ENCODE measurements at regions of chr3 and their contacts with region 1.

Region 1: DNA sequence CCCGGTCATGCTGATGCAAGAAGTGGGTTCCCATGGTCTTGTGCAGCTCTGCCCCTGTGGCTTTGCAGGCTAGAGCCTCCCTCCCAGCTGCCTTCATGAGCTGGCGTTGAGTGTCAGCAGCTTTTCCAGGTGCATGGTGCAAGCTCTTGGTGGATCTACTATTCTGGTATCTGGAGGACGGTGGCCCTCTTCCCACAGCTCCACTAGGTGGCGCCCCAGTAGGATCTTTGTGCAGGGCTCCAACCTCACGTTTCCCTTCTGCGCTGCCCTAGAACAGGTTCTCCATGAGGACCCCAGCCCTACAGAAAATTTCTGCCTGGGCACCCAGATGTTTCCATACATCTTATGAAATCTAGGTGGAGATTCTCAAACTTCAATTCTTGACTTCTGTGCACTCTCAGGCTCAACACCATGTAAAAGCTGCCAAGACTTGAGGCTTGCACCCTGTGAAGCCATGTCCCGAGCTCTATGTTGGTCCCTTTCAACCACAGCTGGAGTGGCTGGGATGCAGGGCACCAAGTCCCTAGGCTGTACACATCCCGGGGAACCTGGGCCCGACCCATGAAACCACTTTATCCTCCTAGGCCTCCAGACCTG is 238.4 kb upstream of the MDFIC2 start:
- DNase-seq: no peak
- H3K4me3 ChIP-seq: no peak overlapping the region
- CTCF ChIP-seq: peak; percentile 84

Region 2: DNA sequence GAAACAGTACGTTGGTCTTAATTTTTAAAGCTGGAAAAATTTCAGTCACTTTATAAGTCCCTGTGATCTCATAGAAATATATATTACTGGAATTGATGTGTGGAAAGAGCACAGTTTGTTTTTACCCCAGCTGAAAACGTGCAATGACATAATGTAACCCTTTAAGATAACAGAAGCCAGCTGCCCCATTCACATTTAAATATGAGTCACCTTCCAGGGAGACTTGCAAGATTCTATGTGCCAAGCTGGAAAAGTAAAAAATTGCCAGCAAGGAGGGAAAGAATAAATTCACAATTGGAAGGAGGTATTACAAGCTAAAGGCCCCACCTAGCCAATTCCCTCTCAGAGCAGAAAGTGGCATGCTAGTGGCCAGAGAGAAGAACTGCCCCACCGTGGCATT is 501.1 kb before region 1 on chr3:
- CTCF ChIA-PET with region 1: no interaction called
- POLR2A ChIA-PET with region 1: no interaction called
- DNase-seq: no peak
- H3K4me3 ChIP-seq: no peak overlapping the region
- CTCF ChIP-seq: no peak

Region 3: DNA sequence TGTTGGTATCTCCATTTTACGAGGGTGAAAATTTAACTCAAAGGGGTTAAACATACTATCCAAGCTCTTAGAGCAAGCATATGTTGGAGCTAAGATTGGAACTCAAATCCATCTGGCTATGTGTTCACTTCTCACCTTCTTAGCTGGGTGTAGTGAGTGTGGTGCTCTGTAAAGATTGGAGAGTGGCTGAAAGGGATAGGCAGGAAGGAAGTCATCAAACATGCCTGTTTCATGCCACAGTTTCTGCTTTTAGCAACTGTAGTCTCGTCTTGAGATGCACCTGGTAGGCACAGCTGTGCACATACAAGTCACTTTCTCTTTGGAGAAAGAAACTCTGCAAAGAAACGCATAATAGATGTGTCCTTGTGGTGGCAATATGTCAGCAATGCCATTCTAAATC is 49.3 kb before region 1 on chr3:
- CTCF ChIA-PET with region 1: no interaction called
- POLR2A ChIA-PET with region 1: no interaction called
- DNase-seq: no peak
- H3K4me3 ChIP-seq: no peak overlapping the region
- CTCF ChIP-seq: no peak

Region 4: DNA sequence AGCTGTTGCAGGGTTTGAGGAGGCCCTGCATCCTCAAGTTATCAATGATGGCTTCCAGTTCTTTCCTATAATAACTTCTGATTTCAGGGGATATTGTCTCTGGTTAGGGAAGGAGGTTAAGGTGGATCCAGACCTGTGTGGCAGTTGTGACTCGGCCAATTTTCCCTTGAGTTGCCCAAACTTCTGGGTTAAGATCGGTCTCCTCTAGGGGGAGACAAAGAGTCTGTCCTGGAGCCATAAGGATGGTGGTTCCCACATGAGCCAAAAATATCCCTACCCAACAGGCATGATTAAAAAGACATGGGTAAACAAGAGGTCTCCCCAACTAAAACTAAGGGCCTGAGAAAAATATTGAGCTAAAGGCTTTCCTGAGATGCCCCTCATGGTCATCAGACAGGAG is 10.9 kb before region 1 on chr3:
- CTCF ChIA-PET with region 1: interaction called, 29 read pairs
- POLR2A ChIA-PET with region 1: no interaction called
- DNase-seq: no peak
- H3K4me3 ChIP-seq: no peak overlapping the region
- CTCF ChIP-seq: no peak

Region 5: GRCh38 chr3:70737678-70738306 is 187.0 kb after region 1 on chr3:
- CTCF ChIA-PET with region 1: no interaction called
- POLR2A ChIA-PET with region 1: no interaction called
- DNase-seq: no peak
- H3K4me3 ChIP-seq: no peak overlapping the region
- CTCF ChIP-seq: no peak

Region 6: DNA sequence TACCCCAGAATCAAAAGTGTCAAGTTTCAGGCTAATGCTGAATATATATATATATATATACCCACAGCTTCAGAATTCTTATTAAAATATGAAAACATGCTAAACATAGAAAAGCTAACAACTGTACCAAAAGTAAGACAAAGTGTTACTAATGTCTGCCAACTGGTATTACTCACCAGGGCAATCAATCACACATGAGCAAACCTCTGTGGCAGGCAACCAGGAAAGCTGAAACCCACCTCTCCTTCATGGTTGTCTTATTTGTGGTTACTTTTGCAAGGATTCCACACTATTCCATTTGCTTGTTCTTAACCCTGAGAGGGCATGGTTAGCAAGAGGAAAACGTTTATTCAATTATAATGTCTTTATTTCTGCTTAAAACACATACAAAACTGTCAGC is 274.0 kb after region 1 on chr3:
- CTCF ChIA-PET with region 1: no interaction called
- POLR2A ChIA-PET with region 1: no interaction called
- DNase-seq: peak; percentile 31
- H3K4me3 ChIP-seq: no peak overlapping the region
- CTCF ChIP-seq: no peak

Region 7: DNA sequence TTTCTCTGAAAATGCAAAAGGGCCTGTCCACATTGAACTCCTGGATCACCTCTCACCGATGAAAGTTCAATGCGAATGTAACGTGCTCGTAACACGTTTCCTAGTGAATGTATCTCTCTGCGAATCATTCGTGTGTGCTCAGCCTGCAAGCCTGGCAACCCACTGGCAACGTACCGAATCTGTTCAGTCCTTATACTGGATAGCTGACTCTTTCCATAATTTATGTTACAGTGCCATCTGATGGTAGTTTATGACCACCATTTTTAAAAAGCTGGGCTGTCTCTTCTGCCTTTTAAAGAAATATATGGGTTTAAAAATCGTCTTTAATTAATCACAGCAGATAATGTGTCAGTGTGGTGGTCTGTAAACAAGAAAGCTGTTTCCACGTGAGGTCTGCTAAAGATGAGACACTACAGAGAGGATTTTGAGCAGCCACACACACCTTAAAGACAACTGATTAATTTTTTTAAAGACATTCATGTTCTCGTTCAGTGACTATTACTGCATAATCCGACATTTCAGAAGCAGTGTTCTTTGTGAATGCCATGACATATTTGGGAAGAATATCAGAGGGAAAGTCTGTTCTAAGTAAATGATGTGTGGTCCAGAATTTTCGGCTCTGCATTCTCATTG is 1102.1 kb after region 1 on chr3:
- CTCF ChIA-PET with region 1: interaction called, 28 read pairs
- POLR2A ChIA-PET with region 1: no interaction called
- DNase-seq: peak; percentile 21
- H3K4me3 ChIP-seq: no peak overlapping the region
- CTCF ChIP-seq: peak; percentile 9

Measured in AG04449 (cell line).